CD14-positive monocyte (primary cell): ENCODE measurements at regions of chr16 and their contacts with region 1.

Region 1: DNA sequence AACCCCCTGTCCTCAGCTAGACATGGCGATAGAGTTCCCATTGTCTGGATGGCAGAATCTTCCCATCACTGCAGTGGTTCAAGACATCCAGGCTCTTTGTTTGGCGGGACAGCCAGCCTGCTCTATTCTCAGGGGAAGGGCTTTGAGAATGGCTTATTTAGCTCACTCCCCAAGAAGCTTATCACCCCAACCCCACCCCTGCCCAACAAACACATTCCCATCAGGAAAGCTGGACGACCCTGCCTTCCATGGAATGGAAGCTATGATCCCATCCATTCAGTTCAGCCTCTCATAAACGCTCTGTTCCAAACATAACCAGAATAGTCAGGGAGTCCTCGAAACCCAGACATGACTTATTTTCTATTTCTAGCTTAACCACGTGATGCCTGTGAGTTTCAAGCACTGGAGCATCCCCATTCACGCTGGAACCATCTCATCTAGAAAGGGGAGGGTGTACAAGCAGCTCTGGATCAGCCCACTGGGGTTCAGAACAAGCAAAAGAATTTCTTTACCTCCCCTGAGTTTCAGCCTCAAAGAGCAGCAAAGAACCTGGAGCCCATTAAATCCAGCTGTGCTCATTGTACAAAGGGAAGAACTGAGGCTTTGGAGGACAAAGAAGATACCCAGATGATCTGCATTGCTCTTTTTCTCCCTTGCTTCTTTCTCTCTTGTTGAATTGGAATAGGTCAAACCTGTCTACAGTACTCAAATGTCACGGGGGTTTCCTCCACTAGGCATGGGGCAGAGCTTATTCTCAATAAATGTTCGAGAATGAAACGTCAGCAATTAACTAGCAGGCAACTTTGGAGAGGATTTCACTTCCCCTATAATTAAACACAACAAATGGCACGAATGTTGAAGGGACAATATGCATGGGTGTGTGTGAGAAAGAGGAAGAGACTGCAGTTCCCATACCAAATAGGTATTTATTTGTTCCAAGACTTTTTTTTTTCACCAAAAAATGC is 93.1 kb downstream of the XYLT1 start:
- DNase-seq: peak; percentile 88 to 95 (median 94)
- H3K4me3 ChIP-seq: peak overlapping the region in 2 of 3 experiments; percentile 9 to 12
- H3K4me3 Mint-ChIP-seq: peak overlapping the region; percentile 43 to 65
- H3K27ac ChIP-seq: peak overlapping the region; percentile 90 to 96
- H3K27ac Mint-ChIP-seq: peak overlapping the region; percentile 93 to 99 (median 97)
- H3K4me1 ChIP-seq: peaks cover 74 to 77% of the 10 kb centered on the region in 2 donors
- H3K4me1 Mint-ChIP-seq: peaks cover 78% of the 10 kb centered on the region
- H3K27me3 ChIP-seq: no peaks in the 10 kb centered on the region
- H3K27me3 Mint-ChIP-seq: peaks cover 0 to 2% (median 0%) of the 10 kb centered on the region in 3 donors
- CTCF ChIP-seq: no peak

Region 2: GRCh38 chr16:17194190-17194780 is 183.4 kb before region 1 on chr16:
- intact Hi-C with region 1: no loop called
- DNase-seq: peak; percentile 29 to 63 (median 53)
- H3K4me3 ChIP-seq: no peak overlapping the region
- H3K4me3 Mint-ChIP-seq: no peak overlapping the region
- H3K27ac ChIP-seq: no peak overlapping the region
- H3K27ac Mint-ChIP-seq: no peak overlapping the region
- H3K4me1 ChIP-seq: peaks cover 0 to 4% of the 10 kb centered on the region in 2 donors
- H3K4me1 Mint-ChIP-seq: peaks cover 6% of the 10 kb centered on the region
- H3K27me3 ChIP-seq: no peaks in the 10 kb centered on the region
- H3K27me3 Mint-ChIP-seq: peaks cover 0 to 1% (median 0%) of the 10 kb centered on the region in 3 donors
- CTCF ChIP-seq: peak; percentile 89

Region 3: DNA sequence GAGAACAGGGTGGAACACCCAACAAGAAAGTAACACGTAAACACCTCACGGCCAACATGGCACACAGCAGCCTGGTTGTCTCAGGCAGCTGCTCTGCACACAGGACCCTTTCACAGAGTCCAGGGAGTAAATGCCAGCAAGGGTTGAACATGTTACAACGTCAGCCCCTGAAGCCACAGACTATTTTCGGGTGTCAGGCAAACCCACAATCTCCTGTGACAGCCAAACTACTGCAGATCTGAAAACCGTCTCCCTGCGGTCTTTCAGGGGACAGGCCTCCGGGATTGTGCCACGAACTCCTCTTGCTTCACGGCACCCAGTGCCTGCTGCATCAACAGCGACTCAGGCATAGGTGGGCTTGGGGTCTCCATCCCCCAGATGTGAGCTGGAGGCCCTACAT is 34.6 kb before region 1 on chr16:
- intact Hi-C with region 1: loop called (anchors 5 kb)
- DNase-seq: peak in 1 of 3 donors; percentile 34
- H3K4me3 ChIP-seq: no peak overlapping the region
- H3K4me3 Mint-ChIP-seq: no peak overlapping the region
- H3K27ac ChIP-seq: peak overlapping the region; percentile 57 to 78
- H3K27ac Mint-ChIP-seq: peak overlapping the region; percentile 89 to 97 (median 95)
- H3K4me1 ChIP-seq: peaks cover 79 to 81% of the 10 kb centered on the region in 2 donors
- H3K4me1 Mint-ChIP-seq: peaks cover 83% of the 10 kb centered on the region
- H3K27me3 ChIP-seq: no peaks in the 10 kb centered on the region
- H3K27me3 Mint-ChIP-seq: peaks cover 0 to 2% (median 0%) of the 10 kb centered on the region in 3 donors
- CTCF ChIP-seq: no peak

Region 4: DNA sequence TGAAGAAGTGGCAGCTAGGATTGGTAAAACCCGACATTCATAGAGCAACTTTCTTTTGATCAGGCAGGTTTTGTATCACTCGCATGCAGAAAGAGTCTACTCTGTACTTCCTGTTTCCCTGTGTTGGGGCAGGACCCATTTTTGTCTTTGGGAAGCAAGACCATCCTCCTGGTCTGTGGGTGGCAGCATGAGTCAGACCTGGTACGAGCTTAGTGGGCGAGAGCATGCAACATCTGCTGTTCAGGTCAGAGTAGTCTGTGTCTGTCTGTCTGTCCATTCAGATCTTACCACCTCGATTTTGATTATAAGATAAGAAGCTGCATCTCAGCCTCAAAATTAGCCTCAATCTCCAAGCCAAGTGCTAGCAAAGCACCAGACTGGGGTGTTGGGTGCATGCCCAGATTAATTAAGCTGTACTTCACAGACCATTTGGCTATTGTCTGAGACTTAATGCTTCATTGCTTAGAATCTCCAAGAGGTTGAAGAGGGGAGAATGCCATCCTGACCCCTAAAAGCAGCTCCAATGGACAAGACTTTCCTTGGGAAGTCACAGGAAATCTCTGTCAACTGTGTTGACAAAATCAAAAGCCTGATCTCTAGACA is 17.8 kb before region 1 on chr16:
- intact Hi-C with region 1: loop called in 1 of 2 experiments (anchors 1 kb)
- DNase-seq: peak; percentile 90 to 96 (median 93)
- H3K4me3 ChIP-seq: no peak overlapping the region
- H3K4me3 Mint-ChIP-seq: peak overlapping the region in 1 of 2 donors; percentile 7
- H3K27ac ChIP-seq: peak overlapping the region; percentile 54 to 88
- H3K27ac Mint-ChIP-seq: peak overlapping the region; percentile 84 to 98 (median 95)
- H3K4me1 ChIP-seq: peaks cover 63 to 64% of the 10 kb centered on the region in 2 donors
- H3K4me1 Mint-ChIP-seq: peaks cover 67% of the 10 kb centered on the region
- H3K27me3 ChIP-seq: no peaks in the 10 kb centered on the region
- H3K27me3 Mint-ChIP-seq: peaks cover 0 to 2% (median 0%) of the 10 kb centered on the region in 3 donors
- CTCF ChIP-seq: no peak

Region 5: GRCh38 chr16:17397499-17397891 is 19.9 kb after region 1 on chr16:
- intact Hi-C with region 1: no loop called
- DNase-seq: no peak
- H3K4me3 ChIP-seq: no peak overlapping the region
- H3K4me3 Mint-ChIP-seq: no peak overlapping the region
- H3K27ac ChIP-seq: no peak overlapping the region
- H3K27ac Mint-ChIP-seq: peak overlapping the region in 1 of 7 donors; percentile 60
- H3K4me1 ChIP-seq: peaks cover 7 to 8% of the 10 kb centered on the region in 2 donors
- H3K4me1 Mint-ChIP-seq: peaks cover 15% of the 10 kb centered on the region
- H3K27me3 ChIP-seq: no peaks in the 10 kb centered on the region
- H3K27me3 Mint-ChIP-seq: peaks cover 0 to 2% (median 0%) of the 10 kb centered on the region in 3 donors
- CTCF ChIP-seq: no peak

Region 6: DNA sequence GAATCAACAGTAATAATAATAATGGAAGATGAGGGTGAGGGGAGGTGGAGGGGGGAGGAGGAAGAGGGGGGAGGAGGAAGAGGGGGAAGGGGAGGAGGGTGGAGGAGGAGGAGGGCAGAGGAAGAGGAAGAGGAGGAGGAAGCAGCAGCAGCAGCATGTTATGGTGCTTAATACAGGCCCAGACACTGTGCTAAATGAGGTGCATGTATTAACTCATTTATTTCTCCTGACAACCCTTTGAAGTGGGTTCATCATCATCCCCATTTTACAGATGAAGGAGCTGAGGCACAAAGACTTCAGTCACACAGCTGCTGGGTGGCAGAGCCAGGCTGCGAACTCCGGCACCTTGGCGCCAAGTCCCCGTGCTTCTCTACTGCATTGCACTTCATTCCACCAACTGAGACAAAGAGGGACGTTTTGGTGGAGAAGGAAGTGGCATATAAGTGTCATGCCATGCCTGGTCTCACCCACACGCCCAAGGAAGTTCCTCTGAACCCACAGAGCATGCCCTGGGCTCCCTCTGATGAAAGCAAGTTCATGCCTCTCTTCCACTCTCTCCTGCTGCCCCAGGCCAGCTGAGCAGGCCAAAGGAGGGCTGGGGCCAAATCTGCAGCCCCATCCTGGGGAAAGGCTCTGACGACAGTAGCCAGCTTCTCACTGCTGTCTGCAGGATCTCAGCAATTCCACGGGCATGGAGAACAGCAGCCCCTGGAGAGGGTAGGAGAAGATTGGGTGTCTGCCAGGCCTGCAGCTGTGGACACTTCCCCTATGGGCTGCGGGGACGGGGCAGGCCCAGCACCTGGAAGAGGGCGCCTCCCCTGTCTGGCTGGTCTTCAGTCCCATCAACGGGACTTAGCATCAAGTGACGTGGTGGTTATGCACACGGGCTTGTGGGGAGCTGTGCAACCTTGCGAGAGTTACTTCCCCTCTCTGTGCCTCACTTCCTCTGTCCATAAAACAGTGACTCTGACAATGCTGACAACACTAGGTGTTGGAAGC is 71.3 kb after region 1 on chr16:
- intact Hi-C with region 1: loop called in 1 of 2 experiments (anchors 5 kb)
- DNase-seq: peak; percentile 86 to 95 (median 93)
- H3K4me3 ChIP-seq: peak overlapping the region in 1 of 3 experiments; percentile 44
- H3K4me3 Mint-ChIP-seq: peak overlapping the region; percentile 31 to 69
- H3K27ac ChIP-seq: peak overlapping the region; percentile 79 to 96
- H3K27ac Mint-ChIP-seq: peak overlapping the region; percentile 94 to 98 (median 96)
- H3K4me1 ChIP-seq: peaks cover 63 to 67% of the 10 kb centered on the region in 2 donors
- H3K4me1 Mint-ChIP-seq: peaks cover 62% of the 10 kb centered on the region
- H3K27me3 ChIP-seq: no peaks in the 10 kb centered on the region
- H3K27me3 Mint-ChIP-seq: peaks cover 0 to 3% (median 2%) of the 10 kb centered on the region in 3 donors
- CTCF ChIP-seq: no peak